ENCODE measurements at regions of chr19 and their contacts with region 1.

Region 1: GRCh38 chr19:16315825-16316505 is 8.7 kb upstream of the KLF2 start:
- DNase-seq: no peak
- H3K4me3 ChIP-seq: peak overlapping the region in 1 of 3 experiments; percentile 1
- H3K27ac ChIP-seq: peak overlapping the region; percentile 88
- H3K4me1 ChIP-seq: peaks cover 20% of the 10 kb centered on the region
- H3K27me3 ChIP-seq: no peaks in the 10 kb centered on the region
- CTCF ChIP-seq: no peak
- POLR2A ChIP-seq: no peak

Region 2: DNA sequence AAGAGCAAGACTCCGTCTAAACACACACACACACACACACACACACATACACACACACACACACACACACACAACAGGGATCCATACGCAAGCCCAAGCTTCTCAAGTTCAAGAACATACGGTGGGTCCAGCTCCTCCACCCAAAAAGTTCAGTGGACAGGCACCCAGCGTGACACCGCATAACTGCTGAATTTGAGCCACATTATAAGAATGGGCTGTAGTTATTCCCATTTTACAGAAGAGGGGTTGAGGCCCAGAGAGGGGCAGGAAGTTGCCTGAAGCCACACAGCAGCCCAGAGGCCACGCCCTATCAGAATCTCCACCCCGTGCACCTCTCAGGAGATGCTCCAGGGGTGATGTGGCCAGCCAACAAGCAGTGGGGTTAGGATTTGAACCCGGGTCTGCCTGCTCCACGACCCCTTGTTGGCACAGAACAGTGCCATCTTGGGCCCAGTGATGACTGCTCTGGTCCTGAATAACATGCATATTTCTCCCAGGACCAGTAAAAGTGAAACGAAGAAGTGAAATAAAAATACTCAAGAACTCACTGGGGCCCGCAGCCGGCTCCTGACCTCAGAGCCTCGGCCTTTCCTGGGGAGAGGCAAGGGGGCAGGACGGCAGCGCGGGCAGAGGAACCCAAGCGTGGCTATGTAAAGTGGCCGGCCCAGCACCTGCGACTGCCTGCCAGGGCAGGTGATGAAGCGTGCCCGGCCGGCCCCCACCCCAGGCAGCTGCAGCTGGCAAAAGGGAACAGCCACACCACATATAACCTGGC is 56.4 kb before region 1 on chr19:
- CTCF ChIA-PET with region 1: interaction called, 5 read pairs
- POLR2A ChIA-PET with region 1: interaction called, 11 read pairs
- dilution Hi-C with region 1: no loop called
- intact Hi-C with region 1: loop called (anchors 1 kb)
- DNase-seq: no peak
- H3K4me3 ChIP-seq: no peak overlapping the region
- H3K27ac ChIP-seq: peak overlapping the region; percentile 56
- H3K4me1 ChIP-seq: peaks cover 21% of the 10 kb centered on the region
- H3K27me3 ChIP-seq: no peaks in the 10 kb centered on the region
- CTCF ChIP-seq: no peak
- POLR2A ChIP-seq: no peak

Region 3: DNA sequence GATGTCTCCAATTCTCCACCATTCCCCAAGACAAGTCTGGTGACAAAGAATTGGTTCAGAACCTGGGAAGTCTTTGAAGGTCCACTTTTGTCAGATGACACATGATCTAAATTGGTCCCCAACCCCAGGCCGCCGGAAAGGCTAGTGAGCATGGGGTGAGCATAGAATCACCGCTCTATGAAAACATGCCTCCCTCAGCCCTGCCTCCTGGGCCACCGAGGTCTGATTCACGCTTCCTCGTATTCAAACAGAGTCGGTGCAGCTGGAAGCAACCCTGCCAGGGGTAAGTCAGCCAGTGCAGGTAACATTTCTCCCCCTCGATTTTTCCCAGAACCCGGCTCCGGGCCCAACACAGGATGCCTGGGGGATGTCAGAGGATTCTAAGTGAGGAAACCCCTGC is 25.3 kb before region 1 on chr19:
- CTCF ChIA-PET with region 1: interaction called, 8 read pairs
- POLR2A ChIA-PET with region 1: interaction called, 3 read pairs
- dilution Hi-C with region 1: no loop called
- intact Hi-C with region 1: loop called (anchors 1 kb)
- DNase-seq: peak; percentile 89
- H3K4me3 ChIP-seq: no peak overlapping the region
- H3K27ac ChIP-seq: peak overlapping the region; percentile 81
- H3K4me1 ChIP-seq: peaks cover 34% of the 10 kb centered on the region
- H3K27me3 ChIP-seq: no peaks in the 10 kb centered on the region
- CTCF ChIP-seq: no peak
- POLR2A ChIP-seq: no peak

Region 4: DNA sequence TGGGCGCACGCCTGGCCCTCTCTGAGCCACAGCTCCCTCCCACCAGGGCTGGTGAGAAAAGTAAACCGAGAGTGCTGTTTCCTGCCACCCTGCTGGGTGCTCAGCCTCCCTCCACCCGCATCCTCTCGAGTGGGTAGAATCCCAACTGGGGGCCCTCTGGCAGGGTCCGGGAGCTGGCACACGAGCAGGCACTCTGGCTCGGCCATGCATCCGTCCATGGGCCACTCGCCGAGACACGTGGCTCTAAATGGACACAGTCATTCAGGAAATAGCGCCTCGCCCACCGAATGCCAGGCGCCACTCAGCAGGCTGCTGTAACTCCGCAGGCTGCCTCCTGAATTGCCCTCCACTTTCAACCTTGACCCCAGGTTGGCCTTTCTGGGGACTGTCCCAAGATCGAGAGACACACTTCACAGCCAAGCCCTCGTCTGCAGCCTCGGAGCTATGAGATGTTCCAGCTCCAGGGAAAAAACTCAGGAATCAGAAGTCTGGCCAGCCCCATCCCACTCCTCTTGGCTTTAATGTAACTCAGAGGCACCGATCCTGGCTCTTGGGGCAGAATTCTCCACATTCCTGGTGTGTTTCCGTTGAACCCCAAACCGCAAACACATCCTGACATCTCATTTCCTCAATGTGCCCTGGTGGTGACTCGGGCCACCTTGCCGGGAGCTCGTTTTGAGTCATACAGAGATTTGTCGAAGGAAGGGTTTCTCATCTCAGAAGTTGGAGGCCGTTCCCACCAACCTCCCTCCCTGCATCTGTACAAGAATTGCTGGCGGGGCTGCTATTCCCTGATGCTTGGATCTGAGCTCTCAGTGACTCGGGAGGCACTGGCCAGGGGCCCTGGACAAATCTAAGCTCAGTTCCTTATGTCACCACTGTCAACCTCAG is 22.8 kb after region 1 on chr19:
- CTCF ChIA-PET with region 1: interaction called, 10 read pairs
- POLR2A ChIA-PET with region 1: interaction called, 10 read pairs
- dilution Hi-C with region 1: no loop called
- intact Hi-C with region 1: no loop called
- DNase-seq: peak; percentile 86
- H3K4me3 ChIP-seq: no peak overlapping the region
- H3K27ac ChIP-seq: peak overlapping the region; percentile 91
- H3K4me1 ChIP-seq: peaks cover 34% of the 10 kb centered on the region
- H3K27me3 ChIP-seq: no peaks in the 10 kb centered on the region
- CTCF ChIP-seq: peak in 1 of 2 donors; percentile 4
- POLR2A ChIP-seq: no peak

Region 5: GRCh38 chr19:16397791-16398471 is 82.0 kb after region 1 on chr19:
- CTCF ChIA-PET with region 1: no interaction called
- POLR2A ChIA-PET with region 1: no interaction called
- dilution Hi-C with region 1: no loop called
- intact Hi-C with region 1: no loop called
- DNase-seq: peak; percentile 59
- H3K4me3 ChIP-seq: no peak overlapping the region
- H3K27ac ChIP-seq: no peak overlapping the region
- H3K4me1 ChIP-seq: no peaks in the 10 kb centered on the region
- H3K27me3 ChIP-seq: no peaks in the 10 kb centered on the region
- CTCF ChIP-seq: no peak
- POLR2A ChIP-seq: no peak

Region 6: GRCh38 chr19:16814526-16815100 is 498.6 kb after region 1 on chr19:
- CTCF ChIA-PET with region 1: no interaction called
- POLR2A ChIA-PET with region 1: no interaction called
- dilution Hi-C with region 1: no loop called
- intact Hi-C with region 1: no loop called
- DNase-seq: no peak
- H3K4me3 ChIP-seq: no peak overlapping the region
- H3K27ac ChIP-seq: no peak overlapping the region
- H3K4me1 ChIP-seq: no peaks in the 10 kb centered on the region
- H3K27me3 ChIP-seq: peaks cover 0 to 6% of the 10 kb centered on the region in 2 experiments
- CTCF ChIP-seq: no peak
- POLR2A ChIP-seq: no peak

Region 7: GRCh38 chr19:17376935-17377600 is 1061.1 kb after region 1 on chr19 and contains the start of gene PLVAP:
- CTCF ChIA-PET with region 1: no interaction called
- POLR2A ChIA-PET with region 1: no interaction called
- dilution Hi-C with region 1: no loop called
- intact Hi-C with region 1: no loop called
- DNase-seq: peak; percentile 69
- H3K4me3 ChIP-seq: peak within 1 kb of the TSS in 1 of 3 experiments; percentile 22
- H3K27ac ChIP-seq: no peak within 1 kb of the TSS
- H3K4me1 ChIP-seq: peaks cover 30% of the 10 kb centered on the region
- H3K27me3 ChIP-seq: no peaks in the 10 kb centered on the region
- CTCF ChIP-seq: peak in 1 of 2 donors; percentile 25
- POLR2A ChIP-seq: no peak
- total RNA-seq, gene PLVAP: 5.7 and 11.1 TPM in 2 replicates